ENCODE measurements at regions of chr1 and their contacts with region 1.

Region 1: DNA sequence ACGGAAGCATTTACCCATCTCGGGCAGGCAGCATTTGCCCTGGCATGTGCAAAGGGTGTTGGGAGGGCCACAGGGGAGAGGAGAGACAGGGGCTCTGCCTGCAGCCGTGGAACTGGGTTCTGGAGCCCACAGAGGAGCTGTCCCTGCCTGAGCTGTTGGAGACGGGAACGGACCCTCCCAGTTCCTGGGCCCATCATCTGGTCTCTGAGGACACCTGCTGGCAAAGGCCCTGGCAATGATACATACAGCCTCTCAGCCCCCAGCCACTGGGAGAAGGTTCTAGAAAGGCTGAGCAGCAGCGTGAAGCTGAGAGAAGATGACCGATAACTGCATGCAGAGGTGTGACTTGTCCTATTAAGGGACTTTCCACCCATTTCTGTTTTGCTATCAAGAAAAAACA is 31.4 kb downstream of the FAAP20 start:
- DNase-seq: no peak
- ATAC-seq: no peak
- H3K4me3 ChIP-seq: no peak overlapping the region
- H3K27ac ChIP-seq: no peak overlapping the region
- H3K4me1 ChIP-seq: peaks cover 0 to 4% (median 0%) of the 10 kb centered on the region in 9 donors
- H3K27me3 ChIP-seq: no peaks in the 10 kb centered on the region
- CTCF ChIP-seq: peak in 4 of 9 donors; percentile 12 to 26 (median 16)

Region 2: DNA sequence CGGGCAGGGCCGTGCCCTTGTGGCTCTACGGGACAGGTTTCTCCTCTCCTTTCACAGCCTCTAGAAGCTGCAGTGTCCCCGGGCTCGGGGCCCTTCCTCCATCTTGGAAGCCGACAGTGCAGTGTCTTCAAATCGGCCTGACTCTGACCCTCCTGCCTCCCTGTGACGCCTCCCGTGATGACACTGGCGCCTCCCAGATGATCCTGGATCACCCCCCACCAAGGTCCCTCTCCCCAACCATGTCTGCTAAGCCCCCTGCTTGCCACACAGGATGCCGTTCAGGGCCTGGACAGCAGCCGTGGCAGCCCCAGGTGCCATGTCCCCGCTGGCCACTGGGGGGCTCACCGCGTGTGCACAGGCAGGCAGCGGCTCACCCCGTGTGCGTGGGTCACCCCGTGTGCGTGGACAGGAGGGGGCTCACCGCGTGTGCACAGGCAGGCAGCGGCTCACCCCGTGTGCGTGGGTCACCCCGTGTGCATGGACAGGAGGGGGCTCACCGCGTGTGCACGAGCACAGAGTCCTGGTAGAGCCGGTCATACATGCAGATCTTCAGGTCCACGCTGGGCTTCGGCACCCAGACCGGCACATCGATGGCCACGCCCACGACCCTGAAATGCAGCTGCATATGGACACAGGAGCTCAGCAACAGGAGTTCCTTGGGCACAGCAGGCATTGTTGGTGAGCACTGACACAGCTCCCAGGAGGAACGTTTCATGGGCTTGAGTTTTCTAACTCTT is 219.2 kb before region 1 on chr1:
- intact Hi-C with region 1: loop called in 1 of 10 experiments (anchors 10 kb)
- DNase-seq: peak; percentile 40 to 62
- ATAC-seq: peak; percentile 68 to 86 (median 76)
- H3K4me3 ChIP-seq: peak overlapping the region in 1 of 10 donors; percentile 12
- H3K27ac ChIP-seq: no peak overlapping the region
- H3K4me1 ChIP-seq: peaks cover 0 to 19% (median 9%) of the 10 kb centered on the region in 9 donors
- H3K27me3 ChIP-seq: peaks cover 0 to 32% (median 10%) of the 10 kb centered on the region in 7 donors
- CTCF ChIP-seq: peak; percentile 72 to 94 (median 89)